ENCODE measurements at regions of chr6 and their contacts with region 1.

Region 1: GRCh38 chr6:143575440-143575839 is 63.9 kb upstream of the FUCA2 start:
- DNase-seq: peak; percentile 54
- H3K4me3 ChIP-seq: no peak overlapping the region
- H3K27ac ChIP-seq: peak overlapping the region in 3 of 4 donors; percentile 3 to 46 (median 29)
- H3K4me1 ChIP-seq: no peaks in the 10 kb centered on the region
- H3K27me3 ChIP-seq: no peaks in the 10 kb centered on the region
- CTCF ChIP-seq: peak; percentile 85 to 90 (median 88)
- EP300 ChIP-seq: no peak
- POLR2A ChIP-seq: no peak

Region 2: DNA sequence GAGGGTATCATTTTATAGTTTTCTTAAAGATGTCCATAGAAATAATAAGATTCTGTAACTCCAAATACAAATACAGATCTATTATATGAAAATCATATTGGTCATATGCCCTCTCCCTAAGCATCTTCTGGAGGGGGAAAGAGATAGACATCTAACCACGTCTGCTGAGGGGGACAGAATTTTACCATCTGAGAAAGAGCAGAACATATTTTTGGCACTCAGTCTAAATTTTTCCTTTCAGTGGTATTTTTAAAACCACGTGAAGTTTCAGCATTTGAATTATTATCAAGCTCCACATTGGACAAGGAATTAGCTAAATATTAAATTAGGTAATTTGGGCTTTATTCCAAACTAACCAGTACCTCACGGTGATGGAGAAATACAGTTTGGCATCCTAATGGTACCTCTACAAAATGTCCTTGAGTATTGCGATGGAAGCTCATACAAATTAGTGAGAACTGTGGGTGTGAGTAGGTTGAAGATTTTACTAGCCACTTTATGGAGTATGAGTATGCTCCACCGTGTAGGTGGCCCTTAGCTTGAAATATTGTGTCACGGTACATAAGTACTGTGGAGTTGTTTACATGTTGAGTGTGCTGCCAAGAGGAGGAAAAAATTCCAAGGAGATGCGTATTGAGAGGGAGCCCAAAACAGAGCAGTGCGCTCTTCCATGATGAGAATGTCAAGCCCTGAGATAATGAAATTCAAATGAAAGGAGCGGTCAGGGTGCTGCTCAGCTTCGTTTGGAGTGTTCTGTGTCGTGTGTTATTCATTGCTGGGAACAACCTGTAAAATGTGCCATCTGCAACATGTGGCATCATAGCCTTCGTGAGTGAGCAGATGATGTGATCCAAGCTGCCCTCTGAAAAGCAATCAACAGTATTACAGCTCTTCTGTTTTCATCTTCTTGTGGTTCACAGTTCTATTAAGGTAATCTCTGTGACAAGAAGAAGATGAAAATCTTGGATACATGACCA is 54.0 kb after region 1 on chr6:
- in situ Hi-C with region 1: no loop called
- intact Hi-C with region 1: no loop called
- DNase-seq: no peak
- H3K4me3 ChIP-seq: no peak overlapping the region
- H3K27ac ChIP-seq: no peak overlapping the region
- H3K4me1 ChIP-seq: peaks cover 0 to 6% (median 0%) of the 10 kb centered on the region in 4 donors
- H3K27me3 ChIP-seq: no peaks in the 10 kb centered on the region
- CTCF ChIP-seq: no peak
- EP300 ChIP-seq: no peak
- POLR2A ChIP-seq: no peak

Region 3: DNA sequence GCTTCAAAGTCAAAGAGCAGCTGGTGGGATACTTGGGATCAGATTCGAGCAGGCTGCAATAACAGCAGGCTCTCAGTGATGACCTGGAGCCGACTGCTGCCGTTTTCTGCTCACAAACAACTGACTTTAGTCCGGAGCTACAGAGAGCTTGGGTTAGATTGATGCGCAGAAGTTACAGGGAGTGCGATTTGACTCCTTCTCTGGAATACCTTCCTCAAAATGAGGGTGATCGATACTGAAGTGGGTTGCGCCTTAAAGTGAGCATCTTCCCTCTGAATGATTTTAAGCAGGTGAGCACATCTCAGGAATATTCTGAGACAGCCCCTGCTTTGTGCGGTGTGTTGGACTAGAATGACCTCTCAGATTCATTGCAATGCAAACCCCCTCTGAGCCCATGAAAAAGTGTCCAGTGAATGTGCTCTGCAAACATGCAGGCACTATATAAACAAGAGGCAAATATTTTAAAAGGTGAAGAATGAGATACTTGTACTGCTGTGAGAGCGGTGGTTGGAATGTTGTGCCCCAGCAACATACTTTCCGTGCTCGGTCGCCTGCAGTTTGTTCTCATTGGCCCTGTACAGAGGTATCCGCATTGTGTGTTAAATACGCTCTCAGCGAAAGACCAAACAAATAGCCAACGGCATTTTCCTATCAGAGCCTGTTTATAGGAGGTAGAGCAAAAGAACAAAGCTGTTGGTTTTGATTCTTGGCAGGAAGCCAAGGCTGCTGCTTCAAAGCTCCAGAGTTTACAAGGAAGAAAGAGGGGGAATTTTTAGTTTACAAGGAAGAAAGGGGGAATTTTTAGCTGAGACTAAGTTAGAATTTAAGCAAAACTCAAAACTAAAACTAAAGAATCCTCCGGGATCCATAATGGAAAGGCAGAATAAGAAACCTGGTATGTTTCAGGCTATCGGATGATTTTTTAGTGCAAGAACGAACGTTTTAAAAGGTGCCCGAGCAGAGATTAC is 170.0 kb after region 1 on chr6:
- in situ Hi-C with region 1: no loop called
- intact Hi-C with region 1: no loop called
- DNase-seq: peak; percentile 62
- H3K4me3 ChIP-seq: peak overlapping the region in 2 of 4 donors; percentile 1 to 13
- H3K27ac ChIP-seq: peak overlapping the region; percentile 66 to 82 (median 78)
- H3K4me1 ChIP-seq: peaks cover 18 to 61% (median 46%) of the 10 kb centered on the region in 4 donors
- H3K27me3 ChIP-seq: no peaks in the 10 kb centered on the region
- CTCF ChIP-seq: no peak
- EP300 ChIP-seq: no peak
- POLR2A ChIP-seq: peak; percentile 30

Region 4: GRCh38 chr6:143806282-143807102 is 231.1 kb after region 1 on chr6:
- in situ Hi-C with region 1: loop called in 1 of 4 experiments (anchors 25 kb)
- intact Hi-C with region 1: no loop called
- DNase-seq: no peak
- H3K4me3 ChIP-seq: no peak overlapping the region
- H3K27ac ChIP-seq: no peak overlapping the region
- H3K4me1 ChIP-seq: no peaks in the 10 kb centered on the region
- H3K27me3 ChIP-seq: no peaks in the 10 kb centered on the region
- CTCF ChIP-seq: no peak
- EP300 ChIP-seq: no peak
- POLR2A ChIP-seq: no peak

Region 5: GRCh38 chr6:143940011-143940597 is 364.7 kb after region 1 on chr6:
- in situ Hi-C with region 1: loop called in 1 of 4 experiments (anchors 10 kb)
- intact Hi-C with region 1: no loop called
- DNase-seq: peak; percentile 62
- H3K4me3 ChIP-seq: no peak overlapping the region
- H3K27ac ChIP-seq: no peak overlapping the region
- H3K4me1 ChIP-seq: peaks cover 0 to 9% (median 0%) of the 10 kb centered on the region in 4 donors
- H3K27me3 ChIP-seq: no peaks in the 10 kb centered on the region
- CTCF ChIP-seq: peak; percentile 58 to 91 (median 81)
- EP300 ChIP-seq: no peak
- POLR2A ChIP-seq: no peak

Region 6: GRCh38 chr6:144008120-144008811 is 432.8 kb after region 1 on chr6 and contains the start of gene PLAGL1:
- in situ Hi-C with region 1: loop called (anchors 5 to 10 kb)
- intact Hi-C with region 1: loop called (anchors 2 kb)
- DNase-seq: peak; percentile 69
- H3K4me3 ChIP-seq: peak within 1 kb of the TSS; percentile 37 to 69 (median 63)
- H3K27ac ChIP-seq: peak within 1 kb of the TSS; percentile 77 to 87 (median 84)
- H3K4me1 ChIP-seq: peaks cover 0 to 18% (median 6%) of the 10 kb centered on the region in 4 donors
- H3K27me3 ChIP-seq: no peaks in the 10 kb centered on the region
- CTCF ChIP-seq: no peak
- EP300 ChIP-seq: no peak
- POLR2A ChIP-seq: peak; percentile 73
- total RNA-seq, gene PLAGL1: 45.3 to 133 (median 50.4) TPM

Region 7: DNA sequence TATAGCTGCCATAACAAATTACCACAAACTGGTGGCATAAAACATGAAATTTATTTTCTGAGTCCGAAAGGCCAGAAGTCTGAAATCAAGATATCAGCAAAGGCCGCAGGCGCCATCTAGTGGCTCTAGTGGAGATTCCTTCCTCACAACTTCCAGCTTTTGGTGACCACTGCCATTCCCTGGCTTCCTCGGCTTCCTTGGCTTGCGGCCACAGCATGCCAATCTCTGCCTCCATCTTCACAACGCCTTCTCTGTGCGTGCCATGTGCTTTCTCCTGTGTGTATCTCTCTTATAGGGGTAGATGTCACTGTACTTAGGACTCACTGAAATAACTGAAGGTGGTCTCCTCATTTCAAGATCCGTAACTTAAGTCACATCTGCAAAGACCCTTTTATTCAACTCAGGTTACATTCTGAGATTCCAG is 438.1 kb after region 1 on chr6:
- in situ Hi-C with region 1: loop called (anchors 5 to 10 kb)
- intact Hi-C with region 1: loop called (anchors 2 kb)
- DNase-seq: peak; percentile 83
- H3K4me3 ChIP-seq: no peak overlapping the region
- H3K27ac ChIP-seq: no peak overlapping the region
- H3K4me1 ChIP-seq: peaks cover 0 to 11% (median 5%) of the 10 kb centered on the region in 4 donors
- H3K27me3 ChIP-seq: no peaks in the 10 kb centered on the region
- CTCF ChIP-seq: peak; percentile 89 to 97 (median 90)
- EP300 ChIP-seq: no peak
- POLR2A ChIP-seq: no peak

Measured in transverse colon (tissue), 4 donors.